ENCODE measurements at regions of chr2 and their contacts with region 1.

Region 1: GRCh38 chr2:217223222-217223930 is 363.5 kb upstream of the TNP1 start:
- DNase-seq: peak; percentile 87
- H3K4me3 Mint-ChIP-seq: peak overlapping the region; percentile 51
- H3K27ac Mint-ChIP-seq: peak overlapping the region; percentile 86
- H3K4me1 Mint-ChIP-seq: peaks cover 42% of the 10 kb centered on the region
- H3K27me3 Mint-ChIP-seq: peaks cover 4% of the 10 kb centered on the region

Region 2: GRCh38 chr2:216478151-216478550 is 745.2 kb before region 1 on chr2:
- intact Hi-C with region 1: loop called (anchors 10 kb)
- DNase-seq: no peak
- H3K4me3 Mint-ChIP-seq: no peak overlapping the region
- H3K27ac Mint-ChIP-seq: no peak overlapping the region
- H3K4me1 Mint-ChIP-seq: peaks cover 19% of the 10 kb centered on the region
- H3K27me3 Mint-ChIP-seq: no peaks in the 10 kb centered on the region

Region 3: DNA sequence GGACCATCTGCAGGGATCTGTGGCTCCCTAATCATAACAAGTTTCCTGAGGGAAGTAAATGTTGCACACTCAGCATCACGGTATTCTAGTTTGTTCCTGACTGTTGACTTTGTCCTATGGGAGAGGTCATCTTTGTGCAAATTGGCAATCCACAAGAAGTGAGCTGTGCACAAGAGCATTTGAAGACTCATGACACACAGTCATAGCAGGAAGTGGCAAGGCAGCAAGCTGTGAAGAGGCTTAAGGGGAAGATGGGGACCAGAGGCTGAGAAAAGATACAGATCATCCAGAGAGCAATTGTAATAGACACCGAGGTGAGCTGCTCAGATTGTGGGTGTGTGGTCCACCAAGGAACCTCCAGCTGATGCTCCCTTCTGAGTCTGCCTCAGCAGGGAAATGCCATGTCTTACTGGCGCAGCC is 366.2 kb before region 1 on chr2:
- intact Hi-C with region 1: loop called (anchors 1 kb)
- DNase-seq: peak; percentile 79
- H3K4me3 Mint-ChIP-seq: no peak overlapping the region
- H3K27ac Mint-ChIP-seq: peak overlapping the region; percentile 29
- H3K4me1 Mint-ChIP-seq: peaks cover 44% of the 10 kb centered on the region
- H3K27me3 Mint-ChIP-seq: peaks cover 2% of the 10 kb centered on the region

Region 4: DNA sequence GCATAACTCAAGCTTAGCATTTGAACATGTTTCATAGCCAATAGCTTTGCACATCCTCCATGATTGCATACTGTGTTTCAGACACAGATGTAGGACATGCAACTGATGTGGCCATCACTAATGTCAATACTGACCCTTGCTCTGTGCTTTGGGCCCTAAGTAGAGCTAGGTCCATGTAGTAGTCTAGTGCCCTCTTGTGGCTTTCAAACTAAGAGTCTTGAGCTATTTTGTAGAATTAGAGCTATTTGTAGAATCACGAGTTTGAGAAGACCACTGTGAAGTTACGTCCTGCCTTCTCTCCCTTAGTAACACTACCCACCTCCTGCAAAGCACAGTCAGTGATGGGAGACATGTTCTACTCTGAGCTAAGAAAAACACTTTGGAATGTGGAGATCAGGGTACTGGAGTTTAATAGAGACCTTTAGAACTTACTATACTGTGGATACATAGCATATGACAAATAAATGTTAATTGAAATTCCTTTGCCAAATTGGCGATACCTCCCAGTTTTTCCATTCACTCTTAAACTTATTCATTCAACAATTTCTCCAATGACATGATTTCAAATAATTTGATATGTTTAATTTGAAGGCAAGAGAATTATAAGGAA is 57.0 kb before region 1 on chr2:
- intact Hi-C with region 1: loop called (anchors 1 kb)
- DNase-seq: no peak
- H3K4me3 Mint-ChIP-seq: no peak overlapping the region
- H3K27ac Mint-ChIP-seq: no peak overlapping the region
- H3K4me1 Mint-ChIP-seq: peaks cover 20% of the 10 kb centered on the region
- H3K27me3 Mint-ChIP-seq: peaks cover 9% of the 10 kb centered on the region